ENCODE measurements at regions of chr17 and their contacts with region 1.

Region 1: GRCh38 chr17:37190493-37190892 is 185.3 kb upstream of the C17orf78 start:
- DNase-seq: no peak
- ATAC-seq: no peak
- H3K4me3 Mint-ChIP-seq: no peak overlapping the region
- H3K27ac Mint-ChIP-seq: no peak overlapping the region
- H3K4me1 Mint-ChIP-seq: peaks cover 6% of the 10 kb centered on the region; the same call in 1 of the 2 replicates
- H3K27me3 Mint-ChIP-seq: no peaks in the 10 kb centered on the region
- CTCF ChIP-seq: no peak

Region 2: DNA sequence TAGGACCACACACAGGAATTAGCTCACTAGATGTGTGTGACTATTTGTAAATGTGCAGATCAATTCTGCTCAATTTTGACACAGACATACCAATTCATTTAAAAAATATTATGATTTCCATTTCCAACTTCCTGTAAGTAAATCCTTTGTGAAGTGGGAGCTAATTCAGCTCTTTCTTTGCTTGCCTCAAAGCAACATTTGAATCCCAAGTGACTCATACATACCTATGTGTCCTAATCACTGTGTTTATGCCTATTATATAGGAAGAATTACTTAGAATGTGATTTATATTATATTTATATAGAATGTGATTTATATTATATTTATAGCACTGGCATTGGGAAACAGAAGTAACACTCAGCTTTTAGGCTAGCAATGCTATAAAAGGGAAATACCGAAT is 10.6 kb before region 1 on chr17:
- CTCF ChIA-PET with region 1: interaction called, 35 read pairs
- POLR2A ChIA-PET with region 1: no interaction called
- DNase-seq: no peak
- ATAC-seq: no peak
- H3K4me3 Mint-ChIP-seq: no peak overlapping the region
- H3K27ac Mint-ChIP-seq: no peak overlapping the region
- H3K4me1 Mint-ChIP-seq: no peaks in the 10 kb centered on the region
- H3K27me3 Mint-ChIP-seq: no peaks in the 10 kb centered on the region
- CTCF ChIP-seq: no peak

Region 3: DNA sequence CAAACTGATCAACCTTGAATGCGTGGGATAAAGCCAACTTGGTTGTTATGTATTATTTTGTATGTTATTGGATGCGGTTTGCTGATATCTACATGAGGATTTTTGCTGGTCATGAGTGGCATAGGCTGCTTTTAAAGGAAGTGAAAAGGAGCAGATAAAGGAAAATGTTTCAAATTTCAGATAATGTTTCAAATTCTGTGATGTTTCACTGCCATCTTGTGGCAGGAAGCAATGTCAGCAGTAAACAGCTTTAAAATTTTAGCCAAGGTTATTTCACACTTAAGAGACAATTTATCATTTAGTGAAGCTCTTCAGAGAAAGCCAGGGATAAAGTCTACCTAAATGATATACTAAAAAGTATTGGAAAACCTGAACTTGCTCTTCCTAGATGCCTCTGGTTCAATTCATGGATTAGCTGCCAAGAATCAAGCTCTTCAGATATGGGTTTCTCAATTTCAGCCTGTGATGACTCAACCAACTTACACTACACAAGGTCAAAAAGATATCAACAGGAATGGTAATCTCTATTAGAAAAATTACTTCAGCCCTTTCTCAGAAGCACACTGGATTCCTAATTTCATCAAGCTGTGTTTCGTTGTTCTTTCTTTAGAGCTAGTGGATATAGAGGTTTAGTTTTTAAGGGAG is 49.3 kb after region 1 on chr17:
- CTCF ChIA-PET with region 1: interaction called, 17 read pairs
- POLR2A ChIA-PET with region 1: no interaction called
- DNase-seq: no peak
- ATAC-seq: no peak
- H3K4me3 Mint-ChIP-seq: no peak overlapping the region
- H3K27ac Mint-ChIP-seq: no peak overlapping the region
- H3K4me1 Mint-ChIP-seq: no peaks in the 10 kb centered on the region
- H3K27me3 Mint-ChIP-seq: no peaks in the 10 kb centered on the region
- CTCF ChIP-seq: no peak

Measured in WTC11 (cell line).